ENCODE measurements at regions of chr21 and their contacts with region 1.

Region 1: DNA sequence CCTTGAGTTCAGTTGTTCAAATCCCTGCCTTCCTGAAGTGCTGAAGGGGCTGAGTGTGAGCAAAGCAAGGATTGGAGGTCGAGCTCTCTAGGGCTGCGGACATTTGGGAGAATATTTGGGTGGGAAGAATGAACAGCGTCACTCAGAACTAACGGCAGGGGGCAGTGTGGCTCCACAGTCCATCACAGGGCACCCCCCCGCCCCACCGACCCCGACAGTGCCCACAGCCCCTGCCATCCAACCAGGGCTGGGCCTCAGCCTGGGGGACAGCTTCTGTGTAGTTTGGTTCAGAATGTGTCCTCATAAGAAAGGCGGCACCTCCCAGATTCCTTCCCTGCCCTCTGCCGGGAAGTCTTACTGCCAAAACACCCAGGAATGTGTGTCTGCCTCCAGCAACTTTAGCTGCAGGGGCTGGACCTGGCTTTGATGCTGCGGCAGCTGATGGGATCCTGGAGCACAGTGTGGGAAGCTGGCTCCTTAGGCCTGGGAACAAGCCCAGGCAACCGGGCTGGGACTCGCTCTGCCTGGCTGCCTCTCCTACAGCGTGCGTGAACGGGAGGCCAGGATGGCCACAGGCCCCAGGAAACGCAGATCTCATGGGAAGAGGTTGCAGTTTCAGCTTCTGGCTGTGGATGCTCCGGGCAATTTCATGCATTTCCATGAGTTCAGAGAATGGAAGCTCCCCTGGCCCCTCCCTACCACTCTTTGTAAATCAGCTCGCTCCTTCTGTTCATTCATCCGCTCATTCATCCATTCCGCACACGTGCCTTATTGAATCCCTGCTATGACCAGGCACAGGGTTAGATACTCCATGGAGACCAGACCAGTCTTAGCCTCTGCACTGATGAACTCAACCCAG is 104.9 kb upstream of the TMPRSS2 start:
- DNase-seq: peak; percentile 98
- H3K4me3 Mint-ChIP-seq: no peak overlapping the region
- H3K27ac Mint-ChIP-seq: peak overlapping the region; percentile 80
- H3K4me1 Mint-ChIP-seq: peaks cover 29% of the 10 kb centered on the region
- H3K27me3 Mint-ChIP-seq: no peaks in the 10 kb centered on the region
- CTCF ChIP-seq: peak; percentile 91

Region 2: GRCh38 chr21:41630249-41630648 is 17.3 kb after region 1 on chr21:
- CTCF ChIA-PET with region 1: interaction called, 15 read pairs
- POLR2A ChIA-PET with region 1: interaction called, 208 read pairs
- intact Hi-C with region 1: loop called (anchors 1 kb)
- DNase-seq: peak; percentile 100
- H3K4me3 Mint-ChIP-seq: peak overlapping the region; percentile 12
- H3K27ac Mint-ChIP-seq: peak overlapping the region; percentile 50
- H3K4me1 Mint-ChIP-seq: peaks cover 31% of the 10 kb centered on the region
- H3K27me3 Mint-ChIP-seq: no peaks in the 10 kb centered on the region
- CTCF ChIP-seq: no peak

Region 3: DNA sequence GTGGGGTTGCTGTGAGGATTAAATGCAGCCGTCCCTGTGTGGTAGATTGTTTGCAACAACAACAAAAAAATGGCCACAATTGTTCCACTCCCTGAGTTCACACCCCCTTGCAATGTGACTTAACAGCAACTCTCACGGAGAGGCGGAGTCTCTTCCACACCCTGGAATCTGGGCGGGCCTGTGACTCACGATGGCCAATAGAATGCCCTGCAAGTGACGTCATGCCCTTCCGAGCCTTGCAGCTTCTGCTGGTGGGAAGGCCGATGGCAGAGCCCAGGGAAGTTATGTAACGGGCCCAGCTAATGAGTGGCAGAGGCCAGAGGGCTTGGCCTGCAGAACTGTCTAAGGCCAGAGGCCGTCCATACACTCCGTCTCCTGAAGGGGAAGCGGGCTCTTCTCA is 66.0 kb after region 1 on chr21:
- CTCF ChIA-PET with region 1: interaction called, 23 read pairs
- POLR2A ChIA-PET with region 1: interaction called, 67 read pairs
- intact Hi-C with region 1: loop called (anchors 2 kb)
- DNase-seq: peak; percentile 100
- H3K4me3 Mint-ChIP-seq: peak overlapping the region; percentile 60
- H3K27ac Mint-ChIP-seq: peak overlapping the region; percentile 87
- H3K4me1 Mint-ChIP-seq: peaks cover 36% of the 10 kb centered on the region
- H3K27me3 Mint-ChIP-seq: no peaks in the 10 kb centered on the region
- CTCF ChIP-seq: no peak

Region 4: DNA sequence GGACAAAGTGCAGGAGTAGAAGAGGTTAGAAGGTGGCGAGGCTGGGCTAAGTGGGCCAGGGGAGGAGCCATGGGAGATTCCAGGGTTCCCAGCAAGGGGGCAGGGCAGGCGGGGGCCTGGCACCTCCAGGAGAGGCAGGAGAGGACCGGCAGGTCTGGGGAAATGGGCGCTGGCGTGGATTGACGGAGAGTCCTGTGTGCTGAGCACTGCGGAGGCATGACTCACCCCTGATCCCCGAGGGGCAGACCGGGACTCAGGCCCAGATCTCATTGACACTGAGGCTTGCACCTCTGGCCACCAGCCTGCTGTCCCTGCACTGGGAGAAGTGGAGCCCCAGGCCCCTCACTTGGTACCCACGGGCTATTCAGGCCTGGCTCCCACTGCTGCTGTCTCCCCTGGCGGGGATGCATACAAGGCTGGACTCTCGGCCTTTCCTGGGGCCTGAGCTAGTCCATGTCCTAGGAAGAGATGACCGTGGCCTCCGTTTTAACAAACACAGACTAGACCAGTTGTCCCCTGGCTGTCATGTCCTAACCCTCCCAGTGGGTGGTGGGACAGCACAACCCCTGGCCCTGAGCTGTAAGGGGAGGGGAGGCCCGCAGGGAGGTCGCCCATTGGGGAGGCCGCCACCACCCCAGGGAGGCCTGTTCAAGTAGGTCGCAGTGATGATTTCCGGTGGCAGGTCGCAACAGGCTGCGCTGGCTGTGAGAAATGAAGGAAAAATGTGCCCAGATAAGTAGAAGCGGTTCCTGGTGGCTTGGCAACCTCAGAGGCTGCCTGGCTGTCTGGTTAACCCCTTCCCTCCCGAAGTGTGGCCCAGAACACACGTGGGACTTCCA is 114.3 kb after region 1 on chr21:
- CTCF ChIA-PET with region 1: interaction called, 16 read pairs
- POLR2A ChIA-PET with region 1: interaction called, 8 read pairs
- intact Hi-C with region 1: loop called (anchors 1 kb)
- DNase-seq: peak; percentile 92
- H3K4me3 Mint-ChIP-seq: peak overlapping the region; percentile 55
- H3K27ac Mint-ChIP-seq: peak overlapping the region; percentile 84
- H3K4me1 Mint-ChIP-seq: peaks cover 25% of the 10 kb centered on the region
- H3K27me3 Mint-ChIP-seq: no peaks in the 10 kb centered on the region
- CTCF ChIP-seq: no peak

Region 5: DNA sequence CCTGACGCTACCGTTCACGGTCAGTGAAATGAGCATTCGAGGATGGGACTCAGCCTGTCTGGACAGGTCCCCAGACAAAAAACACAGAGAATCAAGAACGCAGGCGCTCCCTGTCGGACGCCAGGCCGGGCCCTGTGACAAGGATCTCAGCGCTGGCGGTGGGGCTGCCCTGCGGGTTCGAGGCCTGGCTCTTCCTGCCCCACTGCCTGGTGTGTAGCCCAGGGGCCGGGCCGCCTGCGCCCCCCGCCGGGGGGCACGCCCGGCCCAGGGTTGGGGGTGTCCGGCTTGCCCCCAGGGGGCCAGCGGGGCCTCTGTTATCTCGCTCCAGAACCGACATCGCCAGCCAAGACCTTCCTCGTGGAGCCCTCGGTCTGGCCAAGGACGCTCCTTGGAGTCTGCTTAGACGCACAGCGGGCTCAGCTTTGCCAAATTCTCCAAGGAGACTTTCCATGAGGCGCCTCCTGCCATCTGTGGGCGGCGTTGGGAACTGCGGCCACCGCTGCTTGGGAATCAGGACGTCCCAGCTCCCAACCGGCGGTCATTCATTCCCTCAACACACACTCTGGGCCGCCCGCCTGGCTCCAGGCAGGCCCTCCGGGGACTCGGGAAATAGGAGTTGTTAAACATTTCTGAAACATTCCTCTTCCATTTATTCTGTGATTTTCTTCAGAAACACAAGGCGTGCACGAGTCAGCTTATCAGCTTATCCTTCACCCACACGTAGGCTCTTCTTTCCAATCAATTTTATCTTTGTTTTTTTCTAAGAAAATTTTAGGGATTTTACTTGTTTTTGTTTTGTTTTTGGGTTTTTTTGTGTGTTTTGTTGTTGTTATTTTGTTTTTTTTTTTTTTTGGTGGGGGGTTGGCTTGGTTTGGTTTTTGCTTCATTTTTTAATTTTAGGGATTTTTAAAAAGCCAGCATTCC is 165.3 kb after region 1 on chr21:
- CTCF ChIA-PET with region 1: interaction called, 106 read pairs
- POLR2A ChIA-PET with region 1: interaction called, 52 read pairs
- intact Hi-C with region 1: loop called (anchors 1 kb)
- DNase-seq: peak; percentile 94
- H3K4me3 Mint-ChIP-seq: no peak overlapping the region
- H3K27ac Mint-ChIP-seq: peak overlapping the region; percentile 21
- H3K4me1 Mint-ChIP-seq: peaks cover 19% of the 10 kb centered on the region
- H3K27me3 Mint-ChIP-seq: no peaks in the 10 kb centered on the region
- CTCF ChIP-seq: peak; percentile 96

Region 6: GRCh38 chr21:41824466-41825207 is 211.7 kb after region 1 on chr21:
- CTCF ChIA-PET with region 1: interaction called, 18 read pairs
- POLR2A ChIA-PET with region 1: no interaction called
- intact Hi-C with region 1: no loop called
- DNase-seq: no peak
- H3K4me3 Mint-ChIP-seq: no peak overlapping the region
- H3K27ac Mint-ChIP-seq: no peak overlapping the region
- H3K4me1 Mint-ChIP-seq: no peaks in the 10 kb centered on the region
- H3K27me3 Mint-ChIP-seq: no peaks in the 10 kb centered on the region
- CTCF ChIP-seq: no peak